Right cardiac atrium (tissue), 5 donors: ENCODE measurements at regions of chr18 and their contacts with region 1.

Region 1: GRCh38 chr18:45526114-45526841 is 89.0 kb upstream of the SLC14A2 start:
- DNase-seq: no peak
- ATAC-seq: peak; percentile 70 to 88
- H3K4me3 ChIP-seq: no peak overlapping the region
- H3K27ac ChIP-seq: no peak overlapping the region
- H3K4me1 ChIP-seq: no peaks in the 10 kb centered on the region
- H3K27me3 ChIP-seq: no peaks in the 10 kb centered on the region

Region 2: DNA sequence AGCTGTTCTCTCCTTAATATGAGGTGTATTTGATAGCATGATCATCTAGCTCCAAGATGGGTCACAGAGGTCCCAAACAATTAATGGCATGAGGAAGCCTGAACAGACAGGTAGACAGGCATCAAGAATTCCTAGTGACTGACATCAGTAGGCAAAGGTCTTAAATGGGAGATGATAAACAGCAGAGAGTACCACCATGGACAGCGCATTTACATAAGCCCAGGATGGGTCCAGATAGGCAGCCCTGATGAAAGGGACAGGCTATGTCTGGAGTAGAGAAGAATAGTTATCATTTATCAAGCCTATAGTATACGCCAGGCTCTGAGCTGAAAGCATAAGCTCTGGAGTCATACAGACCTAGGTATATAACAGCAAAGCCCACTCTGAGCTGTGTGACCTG is 1280.3 kb before region 1 on chr18:
- intact Hi-C with region 1: loop called in 1 of 4 experiments (anchors 10 kb)
- DNase-seq: no peak
- ATAC-seq: no peak
- H3K4me3 ChIP-seq: no peak overlapping the region
- H3K27ac ChIP-seq: no peak overlapping the region
- H3K4me1 ChIP-seq: no peaks in the 10 kb centered on the region
- H3K27me3 ChIP-seq: no peaks in the 10 kb centered on the region

Region 3: DNA sequence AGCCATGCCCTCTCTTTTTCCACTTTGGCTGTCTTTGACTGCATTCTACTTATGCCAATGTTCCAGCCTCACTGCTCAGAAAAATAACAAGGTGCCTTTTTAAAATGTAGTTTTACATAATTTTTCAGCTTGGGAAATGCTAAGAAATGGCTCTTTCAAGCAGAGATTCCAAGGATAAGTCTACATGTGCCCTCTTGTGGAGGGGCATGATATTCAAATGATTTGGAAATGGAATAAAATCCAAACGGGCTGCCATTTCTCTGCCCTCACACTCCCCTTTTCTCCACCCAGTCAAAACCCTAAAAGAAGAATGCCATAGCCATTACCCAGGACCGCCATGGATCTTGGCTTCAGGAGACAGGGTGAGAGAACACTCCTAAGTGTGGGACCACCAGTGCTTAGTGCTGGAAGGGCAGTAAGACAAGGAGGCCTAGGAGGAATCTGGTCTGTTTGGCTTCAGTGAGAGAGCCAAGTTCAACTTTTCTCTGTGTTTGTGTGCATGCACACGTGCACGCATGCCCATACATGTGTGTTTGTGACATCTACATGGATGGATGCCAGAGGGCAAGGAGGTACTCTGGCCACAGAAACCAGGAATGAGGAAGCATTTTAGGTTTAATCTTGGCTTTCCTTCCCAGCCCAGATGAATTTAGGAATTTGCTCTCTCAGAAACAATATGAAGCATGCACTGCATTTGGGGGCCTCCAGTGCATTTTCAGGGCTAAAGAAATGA is 85.0 kb before region 1 on chr18:
- intact Hi-C with region 1: loop called in 1 of 4 experiments (anchors 10 kb)
- DNase-seq: no peak
- ATAC-seq: no peak
- H3K4me3 ChIP-seq: no peak overlapping the region
- H3K27ac ChIP-seq: no peak overlapping the region
- H3K4me1 ChIP-seq: no peaks in the 10 kb centered on the region
- H3K27me3 ChIP-seq: no peaks in the 10 kb centered on the region